GM12878 (cell line): ENCODE measurements at regions of chr5 and their contacts with region 1.

Region 1: DNA sequence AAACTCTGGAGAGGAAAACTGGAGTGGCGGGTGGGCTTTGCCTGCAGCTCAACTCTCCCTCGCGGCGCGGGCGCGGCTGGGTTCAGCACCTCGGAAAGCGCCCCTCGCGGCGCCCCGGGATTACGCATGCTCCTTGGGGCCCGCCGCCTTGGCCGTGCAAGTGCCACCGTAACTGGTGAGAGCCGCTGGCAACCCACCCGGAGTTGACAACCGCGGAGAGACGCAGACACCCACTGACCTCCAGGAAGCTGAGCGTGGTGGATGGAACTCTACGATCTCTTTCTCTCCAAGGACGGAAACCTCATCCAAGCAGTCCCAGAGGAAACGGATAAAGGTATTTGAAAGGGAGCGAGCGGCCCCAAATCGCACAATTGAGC is 194 bp upstream of the RXFP3 start:
- DNase-seq: no peak
- ATAC-seq: peak; percentile 30; the same call in 2 of the 3 replicates
- H3K4me3 ChIP-seq: peak overlapping the region; percentile 16; the same call in 1 of the 2 replicates
- H3K27ac ChIP-seq: no peak overlapping the region
- H3K4me1 ChIP-seq: peaks cover 16% of the 10 kb centered on the region
- H3K27me3 ChIP-seq: no peaks in the 10 kb centered on the region; a peak in 1 of 4 replicates
- CTCF ChIP-seq: 0 out of 6 replicates have a peak, but pooled peaks of 1 of the 3 experiments have one; percentile 8
- EP300 ChIP-seq: no peak
- POLR2A ChIP-seq: no peak
- RAD21 ChIP-seq: no peak

Region 2: DNA sequence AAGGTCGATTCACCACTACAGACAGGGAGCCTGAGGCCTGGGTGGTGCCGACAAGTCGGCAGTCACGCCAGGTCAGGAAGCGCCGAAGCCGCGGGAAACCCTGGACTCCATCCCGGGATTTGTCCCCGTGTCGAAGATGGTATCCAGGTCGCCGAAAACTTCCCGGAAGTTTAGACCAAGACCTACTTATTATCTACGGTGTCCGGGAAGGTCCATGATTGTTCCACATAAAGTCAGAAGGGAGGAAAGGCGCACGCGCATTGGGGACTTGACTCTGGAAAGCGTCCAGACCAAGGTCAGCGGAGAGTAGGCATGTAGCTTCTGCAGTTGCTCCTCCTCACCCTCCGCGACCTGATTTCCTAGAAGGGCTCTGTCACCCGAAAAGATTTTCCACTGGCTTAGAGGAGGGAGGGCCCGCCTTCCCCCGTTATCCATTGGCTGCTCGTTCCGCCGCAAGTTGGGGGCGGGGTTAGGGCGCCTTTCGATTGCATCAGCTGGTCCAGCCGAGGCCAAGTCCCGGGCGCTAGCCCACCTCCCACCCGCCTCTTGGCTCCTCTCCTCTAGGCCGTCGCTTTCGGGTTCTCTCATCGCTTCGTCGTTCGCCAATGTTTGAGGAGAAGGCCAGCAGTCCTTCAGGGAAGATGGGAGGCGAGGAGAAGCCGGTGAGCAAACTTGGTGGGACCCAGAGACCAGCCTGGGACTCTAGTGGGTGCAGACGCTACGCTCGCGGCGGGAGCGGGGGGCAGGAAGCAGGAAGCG is 495.3 kb before region 1 on chr5 and contains the start of gene TARS1:
- CTCF ChIA-PET with region 1: interaction called, 70 read pairs
- POLR2A ChIA-PET with region 1: interaction called, 5 read pairs
- RAD21 ChIA-PET with region 1: interaction called, 83 read pairs
- SMC1A ChIA-PET with region 1: interaction called, 65 read pairs
- in situ Hi-C with region 1: loop called (anchors 5 kb)
- intact Hi-C with region 1: loop called (anchors 1 kb)
- DNase-seq: peak; percentile 100
- ATAC-seq: peak; percentile 94
- H3K4me3 ChIP-seq: peak within 1 kb of the TSS; percentile 96
- H3K27ac ChIP-seq: peak within 1 kb of the TSS; percentile 92
- H3K4me1 ChIP-seq: no peaks in the 10 kb centered on the region
- H3K27me3 ChIP-seq: no peaks in the 10 kb centered on the region
- CTCF ChIP-seq: no peak
- EP300 ChIP-seq: 0 out of 4 replicates have a peak, but pooled peaks of 1 of the 2 experiments have one; percentile 21
- POLR2A ChIP-seq: peak; percentile 95
- RAD21 ChIP-seq: no peak
- polyA plus RNA-seq, gene TARS1: 163 to 244 TPM

Region 3: GRCh38 chr5:33594006-33594405 is 342.0 kb before region 1 on chr5:
- CTCF ChIA-PET with region 1: interaction called, 96 read pairs
- POLR2A ChIA-PET with region 1: no interaction called
- RAD21 ChIA-PET with region 1: interaction called, 55 read pairs
- SMC1A ChIA-PET with region 1: interaction called, 77 read pairs
- in situ Hi-C with region 1: no loop called
- intact Hi-C with region 1: loop called (anchors 2 kb)
- DNase-seq: no peak
- ATAC-seq: no peak
- H3K4me3 ChIP-seq: no peak overlapping the region
- H3K27ac ChIP-seq: no peak overlapping the region
- H3K4me1 ChIP-seq: no peaks in the 10 kb centered on the region; the same call in 1 of the 2 replicates
- H3K27me3 ChIP-seq: no peaks in the 10 kb centered on the region
- CTCF ChIP-seq: no peak
- EP300 ChIP-seq: no peak
- POLR2A ChIP-seq: no peak
- RAD21 ChIP-seq: no peak

Region 4: GRCh38 chr5:33824516-33825195 is 111.3 kb before region 1 on chr5:
- CTCF ChIA-PET with region 1: interaction called, 4 read pairs
- POLR2A ChIA-PET with region 1: no interaction called
- RAD21 ChIA-PET with region 1: interaction called, 11 read pairs
- SMC1A ChIA-PET with region 1: interaction called, 14 read pairs
- in situ Hi-C with region 1: no loop called
- intact Hi-C with region 1: no loop called
- DNase-seq: peak; percentile 43
- ATAC-seq: peak; percentile 88
- H3K4me3 ChIP-seq: 0 out of 2 replicates have a peak overlapping the region, but pooled peaks have one; percentile 0
- H3K27ac ChIP-seq: peak overlapping the region; percentile 53
- H3K4me1 ChIP-seq: peaks cover 11% of the 10 kb centered on the region
- H3K27me3 ChIP-seq: no peaks in the 10 kb centered on the region
- CTCF ChIP-seq: no peak
- EP300 ChIP-seq: no peak
- POLR2A ChIP-seq: no peak
- RAD21 ChIP-seq: no peak

Region 5: GRCh38 chr5:33857037-33857436 is 79.0 kb before region 1 on chr5:
- CTCF ChIA-PET with region 1: interaction called, 32 read pairs
- POLR2A ChIA-PET with region 1: interaction called, 3 read pairs
- RAD21 ChIA-PET with region 1: interaction called, 111 read pairs
- SMC1A ChIA-PET with region 1: interaction called, 80 read pairs
- in situ Hi-C with region 1: no loop called
- intact Hi-C with region 1: no loop called
- DNase-seq: peak; percentile 79
- ATAC-seq: peak; percentile 93
- H3K4me3 ChIP-seq: 0 out of 2 replicates have a peak overlapping the region, but pooled peaks have one; percentile 12
- H3K27ac ChIP-seq: peak overlapping the region; percentile 71
- H3K4me1 ChIP-seq: peaks cover 67% of the 10 kb centered on the region
- H3K27me3 ChIP-seq: no peaks in the 10 kb centered on the region
- CTCF ChIP-seq: no peak
- EP300 ChIP-seq: peak in 1 of 2 experiments; percentile 63; a peak in 2 of 4 replicates
- POLR2A ChIP-seq: no peak
- RAD21 ChIP-seq: no peak